Activated CD4-positive, alpha-beta T cell treated with anti-CD3 and anti-CD28 coated beads, Interleukin-2, amount 10 ng/mL, durations not matched to agents 24 days and 14 days (primary cell): ENCODE measurements at regions of chr11 and their contacts with region 1.

Region 1: GRCh38 chr11:75233742-75234172 is 6.8 kb upstream of the TPBGL start:
- DNase-seq: peak; percentile 81
- H3K4me3 Mint-ChIP-seq: no peak overlapping the region
- H3K27ac Mint-ChIP-seq: no peak overlapping the region
- H3K4me1 Mint-ChIP-seq: no peaks in the 10 kb centered on the region
- H3K27me3 Mint-ChIP-seq: peaks cover 8% of the 10 kb centered on the region

Region 2: GRCh38 chr11:75214411-75214821 is 19.3 kb before region 1 on chr11:
- intact Hi-C with region 1: loop called (anchors 1 kb)
- DNase-seq: peak; percentile 95
- H3K4me3 Mint-ChIP-seq: no peak overlapping the region
- H3K27ac Mint-ChIP-seq: no peak overlapping the region
- H3K4me1 Mint-ChIP-seq: peaks cover 1% of the 10 kb centered on the region
- H3K27me3 Mint-ChIP-seq: peaks cover 21% of the 10 kb centered on the region